ENCODE measurements at regions of chr14 and their contacts with region 1.

Region 1: GRCh38 chr14:30656190-30656632 is 34.1 kb downstream of the SCFD1 start:
- DNase-seq: peak in 1 of 10 donors; percentile 25
- H3K4me3 ChIP-seq: no peak overlapping the region
- H3K27ac ChIP-seq: no peak overlapping the region
- H3K27me3 ChIP-seq: no peaks in the 10 kb centered on the region
- CTCF ChIP-seq: peak; percentile 22 to 81 (median 63)

Region 2: GRCh38 chr14:30756596-30756995 is 100.4 kb after region 1 on chr14:
- intact Hi-C with region 1: loop called in 1 of 2 experiments (anchors 2 kb)
- DNase-seq: no peak
- H3K4me3 ChIP-seq: no peak overlapping the region
- H3K27ac ChIP-seq: no peak overlapping the region
- H3K27me3 ChIP-seq: no peaks in the 10 kb centered on the region
- CTCF ChIP-seq: peak in 12 of 56 donors; percentile 12 to 52 (median 26)

Region 3: GRCh38 chr14:30813216-30813615 is 157.0 kb after region 1 on chr14:
- intact Hi-C with region 1: no loop called
- DNase-seq: no peak
- H3K4me3 ChIP-seq: no peak overlapping the region
- H3K27ac ChIP-seq: no peak overlapping the region
- H3K27me3 ChIP-seq: peaks cover 0 to 3% (median 0%) of the 10 kb centered on the region in 45 donors
- CTCF ChIP-seq: no peak

Region 4: GRCh38 chr14:30906752-30907658 is 250.8 kb after region 1 on chr14:
- intact Hi-C with region 1: loop called in 1 of 2 experiments (anchors 5 kb)
- DNase-seq: no peak
- H3K4me3 ChIP-seq: no peak overlapping the region
- H3K27ac ChIP-seq: no peak overlapping the region
- H3K27me3 ChIP-seq: no peaks in the 10 kb centered on the region
- CTCF ChIP-seq: peak in 54 of 56 donors; percentile 16 to 72 (median 48)

Region 5: DNA sequence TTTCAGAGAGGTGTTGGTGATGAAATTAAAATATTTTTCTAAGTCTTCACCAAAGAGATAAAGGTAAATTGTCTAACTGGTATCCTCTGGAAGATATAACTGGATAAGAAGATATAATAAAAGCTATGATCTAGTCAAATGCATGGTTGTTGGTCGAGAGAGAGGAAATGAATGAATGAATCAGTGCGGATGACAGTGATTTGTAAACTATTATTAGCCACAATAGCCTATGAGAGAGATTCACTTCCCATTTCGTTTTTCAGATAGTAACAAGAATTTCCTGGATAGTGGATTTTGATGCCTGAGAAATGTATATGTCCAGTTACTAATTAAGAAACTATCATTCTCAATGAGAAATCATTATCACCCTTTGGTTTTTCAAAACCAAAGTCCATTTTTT is 701.1 kb after region 1 on chr14:
- intact Hi-C with region 1: loop called in 1 of 2 experiments (anchors 5 kb)
- DNase-seq: no peak
- H3K4me3 ChIP-seq: no peak overlapping the region
- H3K27ac ChIP-seq: no peak overlapping the region
- H3K27me3 ChIP-seq: no peaks in the 10 kb centered on the region
- CTCF ChIP-seq: no peak

Measured in dorsolateral prefrontal cortex (tissue), 120 donors.